WTC11 (cell line): ENCODE measurements at regions of chrX and their contacts with region 1.

Region 1: GRCh38 chrX:149938427-149939270 is at the start of gene EOLA2:
- DNase-seq: peak; percentile 87
- ATAC-seq: peak; percentile 41
- H3K4me3 Mint-ChIP-seq: peak within 1 kb of the TSS; percentile 77
- H3K27ac Mint-ChIP-seq: peak within 1 kb of the TSS; percentile 99
- H3K4me1 Mint-ChIP-seq: 0 out of 2 replicates have a peak, but pooled peaks cover 2% of the 10 kb centered on the region
- H3K27me3 Mint-ChIP-seq: no peaks in the 10 kb centered on the region
- CTCF ChIP-seq: 0 out of 2 replicates have a peak, but pooled peaks have one; percentile 34
- total RNA-seq, gene EOLA2: 30.5 to 41.2 TPM (median 31.5 TPM) in 3 replicates

Region 2: DNA sequence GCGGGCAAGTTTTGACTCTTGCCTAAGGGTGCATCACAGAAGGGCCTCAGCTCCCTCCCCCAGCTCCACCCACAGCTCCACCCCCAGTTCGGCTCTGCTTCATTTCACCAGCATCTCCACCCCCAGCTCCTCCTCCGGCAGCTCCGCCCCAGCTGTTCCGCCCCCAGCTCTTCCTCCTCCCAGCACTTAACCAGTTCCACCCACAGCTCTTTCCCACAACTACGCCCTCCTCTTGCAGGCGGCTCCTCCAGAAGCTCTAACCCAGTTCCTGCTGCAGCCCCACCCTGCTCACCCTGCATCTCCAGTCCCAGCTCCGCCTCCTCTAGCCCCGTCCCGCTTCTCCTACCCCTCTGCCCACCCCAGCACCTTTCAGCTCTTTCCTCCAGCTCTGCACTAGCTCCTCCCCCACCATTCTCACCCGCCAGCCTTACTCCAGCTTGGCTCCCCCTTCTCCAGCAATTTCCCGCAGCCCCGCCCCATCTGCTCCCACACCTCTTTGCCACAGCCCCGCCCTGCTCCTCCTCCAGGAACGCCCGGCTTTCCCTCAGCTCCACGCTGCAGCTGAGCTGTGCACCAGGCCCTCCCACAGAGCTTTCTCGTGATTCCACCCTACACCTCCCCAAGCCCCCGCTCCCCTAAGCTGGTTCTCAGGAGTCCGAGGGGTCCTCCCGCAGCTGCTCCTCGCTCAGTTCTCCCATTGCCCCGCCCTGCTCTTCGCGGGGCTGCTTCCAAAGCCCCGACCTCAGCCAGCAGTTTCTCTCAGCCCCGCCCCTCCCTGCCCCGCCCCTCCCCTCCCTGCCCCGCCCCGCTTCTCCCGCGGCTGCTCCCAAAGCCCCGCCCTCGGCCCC is 399.1 kb before region 1 on chrX:
- CTCF ChIA-PET with region 1: interaction called, 22 read pairs
- POLR2A ChIA-PET with region 1: interaction called, 6 read pairs
- DNase-seq: peak; percentile 83
- ATAC-seq: peak; percentile 73
- H3K4me3 Mint-ChIP-seq: peak overlapping the region; percentile 80
- H3K27ac Mint-ChIP-seq: peak overlapping the region; percentile 82; the same call in 1 of the 2 replicates
- H3K4me1 Mint-ChIP-seq: peaks cover 8% of the 10 kb centered on the region; the same call in 1 of the 2 replicates
- H3K27me3 Mint-ChIP-seq: peaks cover 10% of the 10 kb centered on the region
- CTCF ChIP-seq: no peak

Region 3: DNA sequence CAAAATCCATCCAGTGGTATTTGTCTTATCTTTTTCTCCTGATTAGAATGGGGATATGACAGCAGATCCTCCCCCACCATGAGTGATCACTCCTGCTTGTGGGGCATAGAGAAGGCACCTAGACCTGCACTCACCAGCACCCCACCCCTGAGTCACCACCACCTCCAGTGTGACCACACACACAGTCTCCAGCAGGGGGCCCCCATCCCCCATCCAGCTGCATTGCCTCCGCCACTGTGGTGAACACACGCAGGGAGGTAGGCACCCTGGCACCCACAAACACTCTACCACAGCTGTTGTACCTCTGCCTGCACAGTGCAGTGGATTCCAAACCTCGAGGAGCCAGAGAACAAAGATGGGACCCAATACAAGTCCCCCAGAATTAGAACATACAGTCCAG is 66.7 kb before region 1 on chrX:
- CTCF ChIA-PET with region 1: interaction called, 10 read pairs
- POLR2A ChIA-PET with region 1: no interaction called
- DNase-seq: peak; percentile 62
- ATAC-seq: peak; percentile 88
- H3K4me3 Mint-ChIP-seq: no peak overlapping the region
- H3K27ac Mint-ChIP-seq: no peak overlapping the region
- H3K4me1 Mint-ChIP-seq: peaks cover 9% of the 10 kb centered on the region
- H3K27me3 Mint-ChIP-seq: peaks cover 2% of the 10 kb centered on the region; the same call in 1 of the 2 replicates
- CTCF ChIP-seq: peak; percentile 56

Region 4: DNA sequence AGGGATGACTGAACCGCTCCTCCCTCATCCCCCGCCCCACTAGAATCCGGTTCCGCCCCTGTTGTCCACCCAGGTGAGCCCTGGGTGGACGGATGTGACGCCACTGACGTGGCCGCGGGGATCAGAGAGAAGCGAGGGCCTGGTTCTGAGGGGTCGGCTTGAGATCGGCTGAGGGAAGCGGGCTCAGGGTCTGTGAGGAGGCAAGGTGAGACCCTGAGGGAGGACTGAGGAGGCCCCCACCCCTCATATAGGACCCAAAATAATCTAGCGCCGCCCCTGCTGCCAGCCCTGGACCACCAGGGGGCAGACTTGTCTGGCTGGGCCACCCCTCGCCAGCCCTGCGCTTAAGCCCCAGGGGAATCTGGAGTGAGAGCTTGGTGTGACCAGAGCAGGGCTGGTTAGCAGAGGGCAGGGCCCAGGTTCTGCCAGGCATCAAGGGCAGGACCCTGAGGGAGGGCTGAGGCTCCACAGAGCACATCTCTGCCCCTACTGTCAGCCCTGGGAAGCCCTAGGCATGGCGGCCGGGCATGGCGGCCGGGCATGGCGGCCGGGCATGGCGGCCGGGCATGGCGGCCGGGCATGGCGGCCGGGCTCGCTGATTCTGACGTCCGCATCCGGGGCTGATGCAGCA is 57.5 kb before region 1 on chrX and contains the start of gene MAGEA8:
- CTCF ChIA-PET with region 1: interaction called, 14 read pairs
- POLR2A ChIA-PET with region 1: no interaction called
- DNase-seq: peak; percentile 55
- ATAC-seq: peak; percentile 94
- H3K4me3 Mint-ChIP-seq: no peak within 1 kb of the TSS
- H3K27ac Mint-ChIP-seq: no peak within 1 kb of the TSS
- H3K4me1 Mint-ChIP-seq: no peaks in the 10 kb centered on the region
- H3K27me3 Mint-ChIP-seq: no peaks in the 10 kb centered on the region; the same call in 1 of the 2 replicates
- CTCF ChIP-seq: peak; percentile 46
- total RNA-seq, gene MAGEA8: not detected in 3 replicates

Region 5: GRCh38 chrX:149898554-149898953 is 40.1 kb before region 1 on chrX:
- CTCF ChIA-PET with region 1: interaction called, 12 read pairs
- POLR2A ChIA-PET with region 1: no interaction called
- DNase-seq: no peak
- ATAC-seq: no peak
- H3K4me3 Mint-ChIP-seq: no peak overlapping the region
- H3K27ac Mint-ChIP-seq: no peak overlapping the region
- H3K4me1 Mint-ChIP-seq: peaks cover 15% of the 10 kb centered on the region
- H3K27me3 Mint-ChIP-seq: peaks cover 3% of the 10 kb centered on the region
- CTCF ChIP-seq: no peak

Region 6: DNA sequence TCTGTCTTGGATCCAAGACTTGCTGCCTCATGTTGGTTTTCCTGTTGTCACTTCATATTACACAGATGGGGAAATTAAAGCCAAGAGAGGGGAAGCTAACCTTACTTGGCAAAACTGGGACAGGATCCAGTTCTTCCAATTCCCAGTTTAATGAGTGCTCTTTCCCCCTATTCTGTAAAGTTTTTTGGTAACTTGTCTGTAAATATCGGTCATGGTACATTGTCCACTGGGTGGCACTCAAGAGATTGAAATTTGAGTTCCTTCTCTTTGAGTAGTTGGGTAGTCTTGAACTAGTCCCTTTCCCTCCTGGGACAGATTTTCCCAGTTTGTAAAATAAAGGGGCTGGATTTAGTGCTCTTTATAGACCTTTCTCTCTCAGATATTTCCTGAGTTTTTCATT is 12.0 kb after region 1 on chrX:
- CTCF ChIA-PET with region 1: interaction called, 11 read pairs
- POLR2A ChIA-PET with region 1: no interaction called
- DNase-seq: no peak
- ATAC-seq: no peak
- H3K4me3 Mint-ChIP-seq: no peak overlapping the region
- H3K27ac Mint-ChIP-seq: no peak overlapping the region
- H3K4me1 Mint-ChIP-seq: peaks cover 21% of the 10 kb centered on the region
- H3K27me3 Mint-ChIP-seq: no peaks in the 10 kb centered on the region
- CTCF ChIP-seq: no peak

Region 7: GRCh38 chrX:150365051-150365989 is 426.7 kb after region 1 on chrX:
- CTCF ChIA-PET with region 1: interaction called, 10 read pairs
- POLR2A ChIA-PET with region 1: interaction called, 5 read pairs
- DNase-seq: peak; percentile 77
- ATAC-seq: peak; percentile 21
- H3K4me3 Mint-ChIP-seq: peak overlapping the region; percentile 73
- H3K27ac Mint-ChIP-seq: no peak overlapping the region
- H3K4me1 Mint-ChIP-seq: peaks cover 15% of the 10 kb centered on the region
- H3K27me3 Mint-ChIP-seq: peaks cover 81% of the 10 kb centered on the region
- CTCF ChIP-seq: 0 out of 2 replicates have a peak, but pooled peaks have one; percentile 39